Activated B cell treated with CpG ODN at 0.5 μM for 24 hours (primary cell): ENCODE measurements at regions of chr15 and their contacts with region 1.

Region 1: DNA sequence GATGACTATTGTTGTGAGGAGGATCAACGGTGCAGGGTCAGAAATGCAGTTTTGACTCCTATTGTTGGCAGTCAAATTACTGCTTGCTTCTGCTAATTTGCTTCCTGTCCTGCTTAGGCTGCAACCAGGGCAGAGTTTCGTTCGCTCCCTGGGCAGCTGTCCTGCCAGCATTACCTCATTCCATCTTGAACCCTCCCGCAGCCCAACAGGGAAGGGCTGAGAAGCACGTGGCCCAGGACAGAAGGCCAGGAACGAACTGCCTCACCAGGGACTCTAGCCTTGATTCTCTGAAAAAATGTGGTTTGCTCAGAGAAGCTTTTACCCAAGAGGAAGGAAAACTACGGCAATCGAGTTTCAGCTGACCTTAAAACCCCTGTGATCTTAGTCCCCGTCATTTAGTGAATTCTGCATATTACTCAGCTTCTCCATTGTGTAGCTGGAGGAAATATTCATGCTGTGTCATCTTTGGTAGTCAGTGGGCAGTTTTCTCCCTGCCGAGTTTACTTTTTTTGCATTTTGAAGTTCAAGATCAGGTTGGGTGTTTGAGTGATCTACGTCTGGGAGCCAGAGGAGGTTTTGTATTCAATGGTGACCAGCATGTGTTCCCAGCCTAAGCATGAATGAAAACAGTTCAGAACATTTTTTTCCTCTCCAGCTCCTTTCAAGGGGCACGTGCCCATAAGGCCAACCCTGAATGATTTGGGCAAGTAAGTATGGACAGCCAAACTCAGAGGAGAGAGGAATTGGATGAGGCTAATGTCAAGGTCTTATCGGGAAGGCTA is 23.0 kb downstream of the TLNRD1 start:
- DNase-seq: peak; percentile 35
- ATAC-seq: peak; percentile 82
- H3K4me3 Mint-ChIP-seq: peak overlapping the region; percentile 78
- H3K27ac Mint-ChIP-seq: peak overlapping the region; percentile 91
- H3K4me1 Mint-ChIP-seq: peaks cover 18% of the 10 kb centered on the region
- H3K27me3 Mint-ChIP-seq: no peaks in the 10 kb centered on the region
- CTCF ChIP-seq: no peak

Region 2: DNA sequence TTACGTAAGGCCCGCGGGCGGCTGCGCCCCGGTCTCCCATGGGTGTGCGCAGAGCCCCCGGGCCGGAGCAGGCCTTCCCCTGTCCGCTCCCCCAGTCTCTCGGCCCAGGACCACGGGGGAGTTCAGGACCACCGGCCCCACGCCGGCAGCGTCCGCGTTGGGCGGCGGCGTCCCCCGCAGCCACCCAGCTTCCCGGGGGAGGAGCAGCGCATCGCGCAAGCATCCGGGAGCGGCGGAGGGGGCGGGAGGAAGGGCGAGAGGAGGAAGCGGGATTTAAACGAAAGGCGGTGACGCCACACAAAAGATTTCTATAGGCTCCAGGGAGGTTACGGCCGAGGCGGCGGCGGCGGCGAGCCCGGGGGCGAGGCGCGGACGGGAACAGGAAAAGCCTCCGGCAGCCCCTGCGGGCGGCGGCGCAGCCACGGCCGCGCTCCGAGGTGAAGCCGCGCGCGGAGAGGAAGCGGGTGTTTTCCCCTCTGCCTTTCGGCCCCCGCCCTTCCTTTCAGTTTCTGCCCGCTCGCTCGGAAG is 23.0 kb before region 1 on chr15 and contains the start of gene TLNRD1:
- CTCF ChIA-PET with region 1: no interaction called
- POLR2A ChIA-PET with region 1: interaction called, 26 read pairs
- intact Hi-C with region 1: loop called (anchors 1 kb)
- DNase-seq: peak; percentile 80
- ATAC-seq: peak; percentile 65
- H3K4me3 Mint-ChIP-seq: peak within 1 kb of the TSS; percentile 94
- H3K27ac Mint-ChIP-seq: peak within 1 kb of the TSS; percentile 96
- H3K4me1 Mint-ChIP-seq: peaks cover 47% of the 10 kb centered on the region
- H3K27me3 Mint-ChIP-seq: no peaks in the 10 kb centered on the region
- CTCF ChIP-seq: no peak
- total RNA-seq, gene TLNRD1: 25.7 TPM in 2 replicates

Region 3: DNA sequence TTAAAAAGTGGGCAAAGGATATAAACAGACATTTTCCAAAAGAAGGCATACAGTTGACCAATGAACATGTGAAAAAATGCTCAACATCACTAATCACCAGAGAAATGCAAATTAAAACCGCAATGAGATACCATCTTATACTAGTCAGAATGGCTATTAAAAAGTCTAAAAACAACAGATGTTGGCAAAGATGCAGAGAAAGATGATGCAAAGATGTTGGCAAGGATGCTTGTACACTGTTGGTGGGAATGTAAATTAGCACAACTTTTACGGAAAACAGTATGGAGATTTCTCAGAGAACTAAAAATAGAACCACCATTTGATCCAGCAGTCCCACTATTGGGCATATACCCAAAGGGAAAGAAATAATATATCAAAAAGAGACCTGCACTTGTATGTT is 30.6 kb after region 1 on chr15:
- CTCF ChIA-PET with region 1: no interaction called
- POLR2A ChIA-PET with region 1: no interaction called
- intact Hi-C with region 1: loop called (anchors 1 kb)
- DNase-seq: no peak
- ATAC-seq: no peak
- H3K4me3 Mint-ChIP-seq: no peak overlapping the region
- H3K27ac Mint-ChIP-seq: no peak overlapping the region
- H3K4me1 Mint-ChIP-seq: peaks cover 15% of the 10 kb centered on the region
- H3K27me3 Mint-ChIP-seq: no peaks in the 10 kb centered on the region
- CTCF ChIP-seq: no peak